ENCODE measurements at regions of chr4 and their contacts with region 1.

Region 1: DNA sequence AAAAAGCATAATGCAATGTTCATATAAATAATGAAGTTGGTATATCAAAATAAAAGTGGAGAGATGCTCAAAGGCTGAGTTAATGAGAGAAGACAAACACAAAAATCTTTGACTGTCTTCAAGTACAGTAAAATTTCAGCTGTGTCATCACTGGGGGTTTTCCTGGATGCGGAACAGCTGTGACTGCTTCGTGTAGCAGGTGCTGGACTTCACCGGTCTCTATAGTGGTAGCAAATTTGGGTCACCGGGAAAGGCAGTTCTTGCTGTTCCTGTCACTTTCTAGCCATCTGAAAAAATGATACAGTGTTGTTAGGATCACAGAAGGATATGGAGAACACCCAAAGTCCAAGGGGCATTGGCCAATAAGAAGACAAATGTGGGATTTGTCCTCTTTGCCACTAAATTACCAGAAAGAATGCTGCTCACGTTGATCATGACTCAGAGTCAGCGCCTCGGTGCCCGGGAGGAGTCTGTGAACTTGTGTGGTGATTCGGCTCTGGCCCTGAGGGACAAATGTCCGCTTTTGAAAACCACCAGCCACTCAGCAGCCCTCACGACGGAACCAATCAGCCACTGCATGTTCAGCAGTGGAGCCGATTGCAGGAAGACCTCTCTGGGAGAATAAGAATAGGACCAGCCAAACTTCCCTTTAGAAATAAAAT is 230.1 kb upstream of the FAT1 start:
- DNase-seq: no peak
- ATAC-seq: no peak
- H3K4me3 ChIP-seq: no peak overlapping the region
- H3K27ac ChIP-seq: no peak overlapping the region
- H3K4me1 ChIP-seq: peaks cover 2% of the 10 kb centered on the region; the same call in 1 of the 2 replicates
- H3K27me3 ChIP-seq: no peaks in the 10 kb centered on the region
- CTCF ChIP-seq: no peak
- POLR2A ChIP-seq: no peak
- RAD21 ChIP-seq: no peak

Region 2: DNA sequence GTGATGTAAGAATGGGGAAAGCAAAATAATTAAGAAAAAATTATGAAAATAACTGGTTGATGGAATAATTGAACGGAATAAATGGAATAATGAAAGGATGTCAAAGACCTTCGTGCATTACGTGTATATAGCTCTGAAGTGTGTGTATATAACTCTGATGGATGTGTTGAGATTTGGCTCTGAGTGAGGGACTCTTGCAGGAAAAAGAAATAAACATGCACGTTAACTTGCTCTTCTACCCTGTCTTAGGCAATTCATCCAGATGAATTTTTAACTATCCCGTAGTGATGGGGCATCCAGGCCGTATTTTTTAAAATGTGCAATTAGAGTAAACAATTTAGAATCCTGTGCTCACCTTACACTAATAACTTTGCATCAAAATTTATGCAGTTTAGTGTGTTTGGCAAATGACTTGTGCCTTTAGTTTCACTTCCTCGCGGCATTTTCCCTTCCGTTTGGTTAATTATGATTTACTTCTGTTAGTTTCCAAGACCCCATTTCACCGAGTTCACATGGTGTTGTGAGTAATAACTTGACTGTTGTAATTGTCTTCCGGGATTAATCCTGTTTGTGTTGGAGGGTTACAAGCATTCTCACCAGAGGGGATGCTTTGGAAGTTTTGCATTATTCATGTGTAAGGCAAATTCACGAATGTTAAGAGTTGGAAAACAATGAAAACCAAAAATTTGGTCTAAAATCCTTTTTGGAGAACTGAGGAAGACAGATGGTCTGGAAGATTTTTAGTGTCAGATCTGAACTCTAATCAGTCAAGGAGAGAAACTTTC is 26.4 kb after region 1 on chr4:
- CTCF ChIA-PET with region 1: no interaction called
- POLR2A ChIA-PET with region 1: no interaction called
- dilution Hi-C with region 1: no loop called
- in situ Hi-C with region 1: no loop called
- intact Hi-C with region 1: no loop called
- DNase-seq: peak; percentile 66
- ATAC-seq: peak; percentile 72
- H3K4me3 ChIP-seq: peak overlapping the region; percentile 33; the same call in 1 of the 2 replicates
- H3K27ac ChIP-seq: no peak overlapping the region
- H3K4me1 ChIP-seq: peaks cover 10% of the 10 kb centered on the region; the same call in 1 of the 2 replicates
- H3K27me3 ChIP-seq: no peaks in the 10 kb centered on the region
- CTCF ChIP-seq: no peak
- POLR2A ChIP-seq: no peak
- RAD21 ChIP-seq: no peak

Region 3: DNA sequence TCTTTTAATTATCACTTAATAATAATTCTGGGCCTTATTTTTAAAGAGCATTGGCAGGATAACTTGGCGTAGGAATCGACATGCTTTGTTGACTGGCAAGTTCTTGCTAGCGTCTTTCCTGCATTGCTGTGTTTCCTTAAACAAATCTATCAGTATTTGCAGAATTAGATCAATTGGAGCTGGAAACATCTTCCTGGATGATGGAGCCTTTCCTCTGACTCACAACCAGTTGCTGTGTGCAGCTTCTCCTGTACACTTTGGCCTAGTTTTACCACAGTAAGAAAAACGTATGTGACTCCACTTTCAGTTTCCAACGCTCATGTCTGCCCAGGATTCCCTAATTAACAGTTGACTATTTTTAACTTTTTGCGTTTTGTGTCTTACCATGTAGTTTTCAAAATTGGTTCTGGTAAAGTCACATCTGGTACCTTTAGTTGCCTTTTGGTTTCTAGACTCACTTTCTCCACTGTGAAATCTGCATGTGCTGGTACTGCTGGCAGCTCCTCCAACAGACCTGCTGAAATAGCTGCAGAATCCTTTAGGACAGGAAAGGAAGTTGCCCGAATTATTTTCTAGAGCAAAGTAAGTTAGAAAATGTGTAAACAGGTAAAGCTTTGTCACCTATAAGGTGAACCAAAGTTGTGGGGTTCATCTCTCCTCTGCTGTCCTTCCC is 323.1 kb after region 1 on chr4:
- CTCF ChIA-PET with region 1: no interaction called
- POLR2A ChIA-PET with region 1: no interaction called
- dilution Hi-C with region 1: no loop called
- in situ Hi-C with region 1: no loop called
- intact Hi-C with region 1: loop called (anchors 10 kb)
- DNase-seq: peak; percentile 78
- ATAC-seq: peak; percentile 91
- H3K4me3 ChIP-seq: peak overlapping the region; percentile 47; the same call in 1 of the 2 replicates
- H3K27ac ChIP-seq: peak overlapping the region; percentile 17; the same call in 1 of the 2 replicates
- H3K4me1 ChIP-seq: peaks cover 4% of the 10 kb centered on the region
- H3K27me3 ChIP-seq: no peaks in the 10 kb centered on the region
- CTCF ChIP-seq: no peak
- POLR2A ChIP-seq: no peak
- RAD21 ChIP-seq: no peak

Region 4: GRCh38 chr4:187444061-187444460 is 490.3 kb after region 1 on chr4:
- CTCF ChIA-PET with region 1: no interaction called
- POLR2A ChIA-PET with region 1: no interaction called
- dilution Hi-C with region 1: no loop called
- in situ Hi-C with region 1: no loop called
- intact Hi-C with region 1: loop called (anchors 10 kb)
- DNase-seq: peak; percentile 34
- ATAC-seq: no peak
- H3K4me3 ChIP-seq: no peak overlapping the region
- H3K27ac ChIP-seq: no peak overlapping the region
- H3K4me1 ChIP-seq: no peaks in the 10 kb centered on the region
- H3K27me3 ChIP-seq: no peaks in the 10 kb centered on the region
- CTCF ChIP-seq: no peak
- POLR2A ChIP-seq: no peak
- RAD21 ChIP-seq: no peak

Region 5: GRCh38 chr4:187558391-187558790 is 604.7 kb after region 1 on chr4:
- CTCF ChIA-PET with region 1: no interaction called
- POLR2A ChIA-PET with region 1: no interaction called
- dilution Hi-C with region 1: no loop called
- in situ Hi-C with region 1: no loop called
- intact Hi-C with region 1: loop called (anchors 5 kb)
- DNase-seq: peak; percentile 48
- ATAC-seq: peak; percentile 49
- H3K4me3 ChIP-seq: no peak overlapping the region
- H3K27ac ChIP-seq: no peak overlapping the region
- H3K4me1 ChIP-seq: no peaks in the 10 kb centered on the region
- H3K27me3 ChIP-seq: no peaks in the 10 kb centered on the region
- CTCF ChIP-seq: no peak
- POLR2A ChIP-seq: no peak
- RAD21 ChIP-seq: no peak

Region 6: DNA sequence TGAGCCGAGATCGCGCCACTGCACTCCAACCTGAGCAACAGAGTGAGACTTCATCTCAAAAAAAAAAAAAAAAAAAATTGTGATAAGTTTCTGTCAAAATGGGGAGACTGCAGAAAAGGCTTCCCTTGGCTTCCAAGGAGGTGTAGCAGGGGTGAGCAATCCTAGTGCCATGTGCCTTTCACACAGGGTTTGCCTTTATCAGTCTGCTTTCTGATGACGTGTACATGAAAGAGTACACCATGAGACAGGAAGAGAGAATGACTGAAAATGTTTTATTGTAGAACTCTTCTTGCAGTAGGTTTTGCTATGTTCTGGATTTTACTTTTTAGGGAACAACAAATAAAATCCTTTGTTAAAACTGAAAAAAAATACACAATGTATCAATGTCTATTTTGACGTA is 1018.4 kb after region 1 on chr4:
- CTCF ChIA-PET with region 1: no interaction called
- POLR2A ChIA-PET with region 1: no interaction called
- dilution Hi-C with region 1: no loop called
- in situ Hi-C with region 1: no loop called
- intact Hi-C with region 1: loop called (anchors 10 kb)
- DNase-seq: peak; percentile 26
- ATAC-seq: no peak
- H3K4me3 ChIP-seq: no peak overlapping the region
- H3K27ac ChIP-seq: no peak overlapping the region
- H3K4me1 ChIP-seq: no peaks in the 10 kb centered on the region
- H3K27me3 ChIP-seq: no peaks in the 10 kb centered on the region
- CTCF ChIP-seq: no peak
- POLR2A ChIP-seq: no peak
- RAD21 ChIP-seq: no peak